Activated CD8-positive, alpha-beta memory T cell treated with anti-CD3 and anti-CD28 coated beads, Interleukin-2, amount 10 ng/mL, durations not matched to agents 7 days and 5 days (primary cell): ENCODE measurements at regions of chr6 and their contacts with region 1.

Region 1: GRCh38 chr6:104682722-104683643 is 176.7 kb downstream of the HACE1 start:
- DNase-seq: peak; percentile 72
- ATAC-seq: peak; percentile 65
- H3K4me3 Mint-ChIP-seq: no peak overlapping the region
- H3K27ac Mint-ChIP-seq: no peak overlapping the region
- H3K4me1 Mint-ChIP-seq: peaks cover 7% of the 10 kb centered on the region
- H3K27me3 Mint-ChIP-seq: no peaks in the 10 kb centered on the region

Region 2: GRCh38 chr6:104418125-104418524 is 264.9 kb before region 1 on chr6:
- CTCF ChIA-PET with region 1: no interaction called
- DNase-seq: no peak
- ATAC-seq: no peak
- H3K4me3 Mint-ChIP-seq: no peak overlapping the region
- H3K27ac Mint-ChIP-seq: no peak overlapping the region
- H3K4me1 Mint-ChIP-seq: no peaks in the 10 kb centered on the region
- H3K27me3 Mint-ChIP-seq: no peaks in the 10 kb centered on the region

Region 3: DNA sequence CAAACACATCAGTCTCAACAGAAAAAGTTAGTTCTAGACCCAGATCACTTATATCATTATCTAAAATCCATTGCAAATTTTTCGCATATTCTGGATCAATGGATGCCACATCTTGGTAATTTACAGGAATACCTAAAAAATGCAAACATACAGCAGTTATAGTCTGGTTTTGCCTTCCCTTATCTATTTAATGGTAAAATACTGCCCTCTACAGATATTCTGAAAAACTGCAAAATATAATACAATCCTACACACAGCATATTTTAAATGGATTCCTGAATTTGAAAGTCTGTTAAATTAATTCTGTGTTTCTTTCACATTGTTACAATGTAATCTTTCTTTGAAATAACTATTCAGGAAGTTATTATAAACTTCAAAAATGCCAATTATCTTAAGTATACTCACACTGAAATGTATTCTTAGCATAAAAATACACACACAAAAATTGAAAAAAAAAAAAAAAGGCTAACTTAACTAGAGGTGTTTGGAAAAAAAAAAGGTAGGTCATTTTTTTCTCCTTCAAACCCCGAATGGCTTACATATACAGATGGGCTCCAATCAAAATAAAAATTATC is 88.4 kb after region 1 on chr6:
- CTCF ChIA-PET with region 1: interaction called, 11 read pairs
- DNase-seq: no peak
- ATAC-seq: peak; percentile 63
- H3K4me3 Mint-ChIP-seq: no peak overlapping the region
- H3K27ac Mint-ChIP-seq: no peak overlapping the region
- H3K4me1 Mint-ChIP-seq: peaks cover 5% of the 10 kb centered on the region
- H3K27me3 Mint-ChIP-seq: no peaks in the 10 kb centered on the region

Region 4: GRCh38 chr6:105077596-105078385 is 394.8 kb after region 1 on chr6:
- CTCF ChIA-PET with region 1: interaction called, 10 read pairs
- DNase-seq: no peak
- ATAC-seq: no peak
- H3K4me3 Mint-ChIP-seq: no peak overlapping the region
- H3K27ac Mint-ChIP-seq: no peak overlapping the region
- H3K4me1 Mint-ChIP-seq: no peaks in the 10 kb centered on the region
- H3K27me3 Mint-ChIP-seq: peaks cover 31% of the 10 kb centered on the region